Activated T-helper 2 cell treated with anti-CD3 and anti-CD28 coated beads, Interferon-gamma antibody, Interleukin-2, Interleukin-4, amounts not matched to agents 10 μg/mL and 5 μg/mL and 100 μg/mL, durations not matched to agents 14 hours and 24 hours and 36 hours (primary cell): ENCODE measurements at regions of chr10 and their contacts with region 1.

Region 1: DNA sequence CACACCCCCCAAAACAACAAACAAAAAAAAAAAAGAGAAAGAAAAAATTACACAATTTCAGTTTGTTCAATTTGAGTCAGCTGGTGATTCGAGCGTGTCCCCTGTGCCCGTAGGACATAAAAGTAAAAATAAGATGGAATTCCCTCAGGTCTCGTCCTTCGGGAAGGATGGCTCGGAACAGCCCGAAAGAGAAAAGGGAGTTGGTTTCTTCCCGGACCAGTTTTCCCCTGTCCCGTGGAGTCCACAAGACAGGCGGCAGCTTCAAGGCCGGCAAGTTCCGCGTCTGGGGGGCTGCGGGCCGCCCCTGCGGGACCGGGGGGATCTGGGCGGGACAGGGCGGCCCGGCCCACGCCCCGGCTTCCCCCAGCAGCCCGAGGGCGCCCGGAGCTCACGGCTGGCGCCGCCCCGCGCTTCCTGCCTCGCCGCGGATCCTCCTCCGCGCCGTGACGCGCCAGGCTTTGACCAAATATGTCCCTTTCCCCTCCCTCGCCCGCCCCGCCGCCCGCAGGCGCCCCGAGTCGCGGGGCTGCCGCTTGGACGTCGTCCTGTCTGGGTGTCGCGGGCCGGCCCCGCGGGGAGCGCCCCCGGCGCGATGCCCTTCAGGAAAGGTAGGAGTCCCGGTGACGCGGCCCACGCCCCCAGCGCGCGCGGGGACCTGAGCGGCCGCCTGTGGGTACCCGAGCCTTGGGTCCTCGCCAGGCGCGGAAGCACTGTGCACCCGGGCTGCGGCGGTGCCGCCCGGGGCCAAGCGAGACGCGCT is 55.8 kb downstream of the RBM17 start:
- DNase-seq: peak; percentile 86
- H3K4me3 Mint-ChIP-seq: peak overlapping the region; percentile 84
- H3K27ac Mint-ChIP-seq: peak overlapping the region; percentile 80
- H3K4me1 Mint-ChIP-seq: peaks cover 72% of the 10 kb centered on the region
- H3K27me3 Mint-ChIP-seq: no peaks in the 10 kb centered on the region

Region 2: GRCh38 chr10:5746197-5746596 is 398.4 kb before region 1 on chr10:
- intact Hi-C with region 1: no loop called
- DNase-seq: no peak
- H3K4me3 Mint-ChIP-seq: no peak overlapping the region
- H3K27ac Mint-ChIP-seq: no peak overlapping the region
- H3K4me1 Mint-ChIP-seq: peaks cover 5% of the 10 kb centered on the region
- H3K27me3 Mint-ChIP-seq: no peaks in the 10 kb centered on the region

Region 3: GRCh38 chr10:6045314-6045848 is 99.2 kb before region 1 on chr10:
- intact Hi-C with region 1: loop called (anchors 1 kb)
- DNase-seq: peak; percentile 54
- H3K4me3 Mint-ChIP-seq: peak overlapping the region; percentile 69
- H3K27ac Mint-ChIP-seq: peak overlapping the region; percentile 94
- H3K4me1 Mint-ChIP-seq: peaks cover 81% of the 10 kb centered on the region
- H3K27me3 Mint-ChIP-seq: no peaks in the 10 kb centered on the region

Region 4: GRCh38 chr10:6088721-6089390 is 55.7 kb before region 1 on chr10 and contains the start of gene RBM17:
- intact Hi-C with region 1: loop called (anchors 2 kb)
- DNase-seq: peak; percentile 98
- H3K4me3 Mint-ChIP-seq: peak within 1 kb of the TSS; percentile 98
- H3K27ac Mint-ChIP-seq: peak within 1 kb of the TSS; percentile 80
- H3K4me1 Mint-ChIP-seq: peaks cover 63% of the 10 kb centered on the region
- H3K27me3 Mint-ChIP-seq: no peaks in the 10 kb centered on the region
- total RNA-seq, gene RBM17: 257 and 266 TPM in 2 replicates

Region 5: DNA sequence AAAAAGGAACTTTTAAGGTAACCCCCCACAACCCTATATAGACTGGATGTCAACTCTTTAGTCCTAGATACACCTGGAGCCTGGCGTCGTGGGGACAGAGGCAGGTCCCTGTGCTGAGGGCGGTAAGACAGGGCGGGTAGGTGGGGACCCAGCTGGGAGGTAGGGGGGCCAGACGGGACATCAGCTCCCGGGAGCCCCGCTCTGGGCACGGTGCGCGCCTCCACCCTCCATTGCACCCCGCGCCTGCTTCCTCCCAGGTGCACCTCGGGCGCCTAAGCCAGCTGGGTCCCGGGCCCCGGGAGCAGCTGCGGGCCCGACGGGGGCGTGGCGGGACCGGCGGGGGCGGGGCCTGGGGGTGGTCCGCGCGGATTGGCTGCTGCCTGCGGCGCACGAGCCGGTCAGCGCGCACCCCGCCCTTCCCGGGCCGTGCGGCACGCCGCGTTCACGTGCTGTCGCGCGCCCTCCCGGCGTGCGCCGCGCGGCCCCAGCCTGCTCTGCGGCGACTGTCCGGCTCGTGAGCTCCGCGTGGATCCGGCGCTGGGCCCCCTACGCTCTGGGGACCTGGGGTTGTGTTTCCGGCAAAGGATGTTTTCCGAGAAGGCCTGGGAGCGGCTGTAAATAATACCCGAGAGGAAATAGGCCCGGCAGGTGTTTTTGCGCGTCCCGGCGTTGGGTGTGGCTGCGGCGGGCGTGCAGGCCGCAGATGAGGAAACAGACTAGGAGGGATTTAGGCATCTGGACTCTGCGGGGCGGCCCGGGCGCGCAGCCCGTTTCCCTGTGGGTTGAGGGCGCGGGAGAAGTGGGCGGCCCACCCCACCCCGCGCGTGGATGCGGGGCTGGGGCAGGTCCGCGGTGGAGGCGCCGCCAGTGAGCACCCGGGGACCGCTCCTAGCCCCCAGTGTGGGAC is 19.0 kb after region 1 on chr10:
- intact Hi-C with region 1: loop called (anchors 2 kb)
- DNase-seq: peak; percentile 90
- H3K4me3 Mint-ChIP-seq: peak overlapping the region; percentile 92
- H3K27ac Mint-ChIP-seq: peak overlapping the region; percentile 89
- H3K4me1 Mint-ChIP-seq: peaks cover 45% of the 10 kb centered on the region
- H3K27me3 Mint-ChIP-seq: no peaks in the 10 kb centered on the region

Region 6: GRCh38 chr10:6401562-6402348 is 257.2 kb after region 1 on chr10:
- intact Hi-C with region 1: loop called (anchors 1 kb)
- DNase-seq: peak; percentile 47
- H3K4me3 Mint-ChIP-seq: no peak overlapping the region
- H3K27ac Mint-ChIP-seq: no peak overlapping the region
- H3K4me1 Mint-ChIP-seq: peaks cover 37% of the 10 kb centered on the region
- H3K27me3 Mint-ChIP-seq: peaks cover 11% of the 10 kb centered on the region